T-cell (primary cell): ENCODE measurements at regions of chr15 and their contacts with region 1.

Region 1: DNA sequence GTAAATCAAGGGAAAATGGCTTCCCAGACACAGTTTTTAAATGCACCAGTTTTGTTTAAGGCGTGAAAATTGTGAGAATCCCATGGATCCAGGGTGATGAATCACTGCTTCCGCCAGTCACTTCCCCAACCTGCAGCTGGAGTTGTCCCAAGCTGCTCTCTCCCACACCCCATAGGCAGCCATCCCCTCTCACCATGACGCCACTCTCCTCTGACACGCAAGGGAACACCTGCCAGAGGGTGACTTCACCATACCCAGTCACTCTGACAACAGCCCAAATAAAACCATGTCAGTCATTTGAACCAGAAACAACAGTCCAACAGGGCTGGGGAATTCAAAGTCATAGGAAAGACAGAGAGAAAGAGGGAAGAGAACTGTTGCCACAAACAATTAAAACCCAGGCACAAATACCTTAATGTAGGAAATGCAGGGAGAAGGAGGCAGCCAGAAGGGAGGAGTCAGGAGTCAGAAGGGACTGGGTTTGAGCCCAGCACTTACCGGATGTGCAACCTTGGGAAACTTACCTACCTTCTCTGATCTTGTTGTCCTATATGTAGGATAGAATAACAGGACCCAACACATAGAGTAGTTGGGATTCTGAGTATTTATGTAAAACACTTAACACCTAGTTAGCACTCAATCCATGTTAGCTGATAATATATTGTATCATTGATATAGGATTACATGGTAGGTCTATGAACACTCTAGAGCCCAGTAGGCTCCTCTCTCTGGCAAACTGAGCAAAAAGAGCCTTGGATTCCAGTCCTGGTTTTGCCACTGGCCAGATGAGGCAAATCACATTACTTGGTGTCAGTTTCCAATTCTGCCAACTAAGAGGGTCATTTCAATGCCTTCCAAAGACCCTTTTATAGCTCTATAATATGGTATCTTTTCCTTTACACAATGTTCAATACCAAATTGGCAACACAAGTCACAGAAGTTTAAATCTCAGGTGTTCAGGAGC is 326.3 kb upstream of the ICE2 start:
- DNase-seq: no peak
- ATAC-seq: no peak
- H3K4me3 ChIP-seq: no peak overlapping the region
- H3K4me3 Mint-ChIP-seq: no peak overlapping the region
- H3K27ac ChIP-seq: peak overlapping the region; percentile 69
- H3K27ac Mint-ChIP-seq: peak overlapping the region; percentile 90 to 92
- H3K4me1 ChIP-seq: peaks cover 31 to 35% of the 10 kb centered on the region in 2 experiments
- H3K4me1 Mint-ChIP-seq: peaks cover 75 to 88% (median 87%) of the 10 kb centered on the region in 3 donors
- H3K27me3 ChIP-seq: no peaks in the 10 kb centered on the region
- H3K27me3 Mint-ChIP-seq: no peaks in the 10 kb centered on the region

Region 2: DNA sequence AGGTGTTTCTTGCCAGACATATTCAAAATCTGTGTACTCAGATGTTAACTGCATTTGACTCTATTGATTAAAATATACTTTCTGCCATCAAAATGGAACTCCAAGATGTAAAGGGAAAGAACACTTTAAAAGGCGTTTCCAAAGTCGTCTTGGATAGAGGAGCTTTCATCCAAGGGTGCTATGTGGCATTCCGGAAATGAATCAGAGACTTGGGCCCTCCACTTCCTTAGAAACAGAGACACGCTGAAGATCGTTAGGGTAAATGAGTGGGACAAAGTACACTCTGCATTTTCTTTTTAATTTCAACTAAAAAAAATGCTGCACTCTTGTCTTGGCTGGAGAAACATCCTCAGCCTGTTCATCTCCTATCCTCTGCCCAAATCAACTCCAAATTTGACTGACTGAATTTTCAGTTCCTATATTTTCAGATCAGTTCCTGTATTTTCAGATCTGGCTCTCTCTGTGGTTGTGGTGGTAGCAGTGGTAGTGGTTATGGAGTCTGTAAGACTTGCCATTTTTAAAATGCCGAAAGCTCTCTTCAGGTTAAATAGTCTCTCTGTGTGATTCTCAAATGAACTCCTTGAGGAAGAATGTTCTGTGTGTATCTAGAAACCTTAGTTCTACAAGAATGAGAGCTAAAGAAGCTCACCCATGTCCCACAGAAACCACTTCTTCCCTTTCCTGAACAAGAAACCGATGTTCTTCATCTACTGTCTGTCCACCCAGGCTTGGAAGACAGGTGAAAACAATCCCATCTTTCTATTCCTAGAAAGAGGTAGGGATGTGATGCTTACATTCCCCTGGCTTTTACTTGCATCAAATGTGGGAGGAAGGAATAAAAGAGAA is 169.5 kb before region 1 on chr15:
- CTCF ChIA-PET with region 1: no interaction called
- POLR2A ChIA-PET with region 1: no interaction called
- DNase-seq: no peak
- ATAC-seq: no peak
- H3K4me3 ChIP-seq: no peak overlapping the region
- H3K4me3 Mint-ChIP-seq: no peak overlapping the region
- H3K27ac ChIP-seq: no peak overlapping the region
- H3K27ac Mint-ChIP-seq: peak overlapping the region in 1 of 2 donors; percentile 25
- H3K4me1 ChIP-seq: no peaks in the 10 kb centered on the region
- H3K4me1 Mint-ChIP-seq: peaks cover 11 to 17% (median 12%) of the 10 kb centered on the region in 3 donors
- H3K27me3 ChIP-seq: no peaks in the 10 kb centered on the region
- H3K27me3 Mint-ChIP-seq: no peaks in the 10 kb centered on the region

Region 3: GRCh38 chr15:60751985-60752952 is 53.0 kb before region 1 on chr15:
- CTCF ChIA-PET with region 1: no interaction called
- POLR2A ChIA-PET with region 1: interaction called in 1 of 2 experiments, 11 read pairs
- DNase-seq: no peak
- ATAC-seq: no peak
- H3K4me3 ChIP-seq: no peak overlapping the region
- H3K4me3 Mint-ChIP-seq: no peak overlapping the region
- H3K27ac ChIP-seq: no peak overlapping the region
- H3K27ac Mint-ChIP-seq: no peak overlapping the region
- H3K4me1 ChIP-seq: no peaks in the 10 kb centered on the region
- H3K4me1 Mint-ChIP-seq: peaks cover 0 to 6% (median 0%) of the 10 kb centered on the region in 3 donors
- H3K27me3 ChIP-seq: no peaks in the 10 kb centered on the region
- H3K27me3 Mint-ChIP-seq: no peaks in the 10 kb centered on the region

Region 4: DNA sequence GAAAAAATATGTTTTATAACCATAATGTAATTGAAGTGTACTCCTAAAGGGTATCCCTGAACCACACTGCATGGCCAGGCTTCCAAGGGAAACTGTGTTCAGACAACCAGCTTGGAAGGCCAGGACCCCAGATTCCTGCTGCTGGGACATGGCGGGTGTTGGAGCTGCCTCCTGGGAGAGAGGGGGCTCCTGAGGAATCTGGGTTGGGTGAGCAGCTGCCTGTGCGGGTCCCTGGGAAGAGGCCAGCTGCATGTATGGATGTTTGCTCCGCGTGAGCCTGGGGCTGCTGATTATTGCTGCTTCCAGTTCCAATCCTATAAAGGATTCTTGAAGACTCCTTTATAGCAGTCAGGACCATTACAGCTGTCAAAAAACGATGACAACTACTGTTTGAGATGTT is 22.2 kb after region 1 on chr15:
- CTCF ChIA-PET with region 1: no interaction called
- POLR2A ChIA-PET with region 1: no interaction called
- DNase-seq: no peak
- ATAC-seq: no peak
- H3K4me3 ChIP-seq: no peak overlapping the region
- H3K4me3 Mint-ChIP-seq: no peak overlapping the region
- H3K27ac ChIP-seq: no peak overlapping the region
- H3K27ac Mint-ChIP-seq: no peak overlapping the region
- H3K4me1 ChIP-seq: no peaks in the 10 kb centered on the region
- H3K4me1 Mint-ChIP-seq: peaks cover 16 to 26% (median 18%) of the 10 kb centered on the region in 3 donors
- H3K27me3 ChIP-seq: no peaks in the 10 kb centered on the region
- H3K27me3 Mint-ChIP-seq: no peaks in the 10 kb centered on the region

Region 5: GRCh38 chr15:60928970-60929369 is 123.7 kb after region 1 on chr15:
- CTCF ChIA-PET with region 1: no interaction called
- POLR2A ChIA-PET with region 1: no interaction called
- DNase-seq: no peak
- ATAC-seq: no peak
- H3K4me3 ChIP-seq: no peak overlapping the region
- H3K4me3 Mint-ChIP-seq: no peak overlapping the region
- H3K27ac ChIP-seq: no peak overlapping the region
- H3K27ac Mint-ChIP-seq: no peak overlapping the region
- H3K4me1 ChIP-seq: peaks cover 0 to 6% of the 10 kb centered on the region in 2 experiments
- H3K4me1 Mint-ChIP-seq: peaks cover 0 to 21% (median 11%) of the 10 kb centered on the region in 3 donors
- H3K27me3 ChIP-seq: peaks cover 0 to 4% of the 10 kb centered on the region in 2 experiments
- H3K27me3 Mint-ChIP-seq: peaks cover 5 to 22% of the 10 kb centered on the region in 2 donors

Region 6: GRCh38 chr15:61275901-61276300 is 470.6 kb after region 1 on chr15:
- CTCF ChIA-PET with region 1: no interaction called
- POLR2A ChIA-PET with region 1: no interaction called
- DNase-seq: no peak
- ATAC-seq: no peak
- H3K4me3 ChIP-seq: no peak overlapping the region
- H3K4me3 Mint-ChIP-seq: no peak overlapping the region
- H3K27ac ChIP-seq: no peak overlapping the region
- H3K27ac Mint-ChIP-seq: no peak overlapping the region
- H3K4me1 ChIP-seq: no peaks in the 10 kb centered on the region
- H3K4me1 Mint-ChIP-seq: no peaks in the 10 kb centered on the region
- H3K27me3 ChIP-seq: peaks cover 0 to 5% of the 10 kb centered on the region in 2 experiments
- H3K27me3 Mint-ChIP-seq: peaks cover 25 to 28% of the 10 kb centered on the region in 2 donors